Heart right ventricle (tissue), 16 donors: ENCODE measurements at regions of chr10 and their contacts with region 1.

Region 1: DNA sequence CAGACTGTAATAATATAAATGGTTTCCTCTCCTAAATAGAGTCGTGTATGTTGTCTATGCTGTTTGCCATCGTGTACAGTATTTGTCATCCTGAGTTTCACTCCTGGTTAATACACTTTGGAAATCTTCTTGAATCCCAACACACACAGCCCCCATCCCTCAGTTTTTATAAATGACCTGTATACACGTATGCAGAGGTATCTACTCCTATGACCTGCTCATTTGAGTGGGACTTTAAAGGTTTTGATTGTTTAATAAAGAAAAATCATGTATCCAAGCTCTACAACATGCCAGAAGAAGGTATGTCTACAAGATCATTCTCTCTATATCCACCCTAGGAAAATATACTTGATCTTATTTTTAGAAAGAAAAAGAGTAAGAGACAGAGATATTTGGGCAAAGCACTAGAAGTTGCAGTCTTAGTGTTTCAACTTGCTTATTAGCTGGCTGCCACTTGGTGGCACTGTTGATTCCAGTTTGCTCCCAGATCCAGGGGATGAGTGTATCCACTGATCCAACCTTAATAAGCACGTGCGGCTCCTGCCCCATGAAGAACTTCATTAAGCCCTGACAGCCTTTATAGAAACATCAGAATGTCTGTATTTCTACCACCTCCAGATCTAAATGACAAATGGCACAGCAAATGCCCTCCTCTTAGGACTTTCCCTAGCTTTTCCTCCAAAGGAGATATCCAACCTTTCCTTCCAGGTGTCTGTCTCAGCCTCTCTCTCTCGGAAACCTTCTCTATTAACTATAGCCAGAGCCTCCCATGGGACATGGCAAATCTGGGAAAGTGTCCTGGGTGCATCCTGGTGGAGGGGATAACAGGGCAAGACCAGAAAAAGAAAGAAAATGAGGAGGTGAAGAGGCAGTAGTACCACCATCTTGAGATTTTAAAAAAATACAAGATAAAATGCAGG is 181.6 kb upstream of the NEBL start:
- DNase-seq: peak; percentile 42 to 72
- ATAC-seq: peak; percentile 69 to 93 (median 85)
- H3K4me3 ChIP-seq: no peak overlapping the region
- H3K27ac ChIP-seq: peak overlapping the region in 5 of 10 donors; percentile 8 to 73 (median 51)
- H3K4me1 ChIP-seq: peaks cover 0 to 15% (median 0%) of the 10 kb centered on the region in 9 donors
- H3K27me3 ChIP-seq: no peaks in the 10 kb centered on the region
- CTCF ChIP-seq: peak; percentile 52 to 87 (median 79)

Region 2: GRCh38 chr10:20891338-20891714 is 187.3 kb before region 1 on chr10:
- intact Hi-C with region 1: loop called in 2 of 10 experiments (anchors 5 kb)
- DNase-seq: no peak
- ATAC-seq: peak in 4 of 8 donors; percentile 47 to 68 (median 56)
- H3K4me3 ChIP-seq: peak overlapping the region in 9 of 10 donors; percentile 2 to 59 (median 35)
- H3K27ac ChIP-seq: peak overlapping the region in 9 of 10 donors; percentile 23 to 95 (median 89)
- H3K4me1 ChIP-seq: peaks cover 0 to 27% (median 5%) of the 10 kb centered on the region in 9 donors
- H3K27me3 ChIP-seq: no peaks in the 10 kb centered on the region
- CTCF ChIP-seq: no peak

Region 3: GRCh38 chr10:21125471-21126228 is 47.0 kb after region 1 on chr10:
- intact Hi-C with region 1: no loop called
- DNase-seq: no peak
- ATAC-seq: no peak
- H3K4me3 ChIP-seq: no peak overlapping the region
- H3K27ac ChIP-seq: no peak overlapping the region
- H3K4me1 ChIP-seq: no peaks in the 10 kb centered on the region
- H3K27me3 ChIP-seq: no peaks in the 10 kb centered on the region
- CTCF ChIP-seq: no peak

Region 4: DNA sequence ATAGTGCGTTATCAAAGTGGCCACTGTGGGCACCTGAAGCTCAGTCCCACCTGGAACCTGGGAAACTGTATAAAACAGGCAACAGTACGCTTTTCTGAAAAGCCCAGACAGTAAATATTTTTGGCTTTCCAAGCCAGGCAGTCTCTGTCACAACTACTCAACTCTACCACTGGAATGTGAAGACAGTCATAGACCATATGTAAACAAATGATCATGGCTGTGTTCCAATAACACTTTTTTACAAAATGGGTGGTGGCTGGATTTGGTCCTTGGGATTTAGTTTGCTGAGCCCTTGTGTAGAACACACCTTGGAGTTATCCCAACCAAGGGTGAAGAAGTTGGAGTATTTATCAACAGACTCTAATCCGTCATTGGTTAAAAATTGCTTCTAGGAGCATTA is 187.0 kb after region 1 on chr10:
- intact Hi-C with region 1: loop called (anchors 1 to 5 kb)
- DNase-seq: no peak
- ATAC-seq: no peak
- H3K4me3 ChIP-seq: no peak overlapping the region
- H3K27ac ChIP-seq: no peak overlapping the region
- H3K4me1 ChIP-seq: peaks cover 0 to 4% (median 0%) of the 10 kb centered on the region in 9 donors
- H3K27me3 ChIP-seq: no peaks in the 10 kb centered on the region
- CTCF ChIP-seq: no peak

Region 5: GRCh38 chr10:21273400-21273932 is 194.8 kb after region 1 on chr10:
- intact Hi-C with region 1: loop called in 9 of 10 experiments (anchors 1 to 5 kb)
- DNase-seq: no peak
- ATAC-seq: peak in 3 of 8 donors; percentile 15 to 50 (median 21)
- H3K4me3 ChIP-seq: no peak overlapping the region
- H3K27ac ChIP-seq: no peak overlapping the region
- H3K4me1 ChIP-seq: peaks cover 0 to 5% (median 0%) of the 10 kb centered on the region in 9 donors
- H3K27me3 ChIP-seq: no peaks in the 10 kb centered on the region
- CTCF ChIP-seq: no peak

Region 6: GRCh38 chr10:21953585-21954057 is 875.0 kb after region 1 on chr10:
- intact Hi-C with region 1: loop called in 1 of 10 experiments (anchors 10 kb)
- DNase-seq: no peak
- ATAC-seq: peak in 5 of 8 donors; percentile 52 to 72 (median 59)
- H3K4me3 ChIP-seq: no peak overlapping the region
- H3K27ac ChIP-seq: no peak overlapping the region
- H3K4me1 ChIP-seq: peaks cover 0 to 22% (median 13%) of the 10 kb centered on the region in 9 donors
- H3K27me3 ChIP-seq: no peaks in the 10 kb centered on the region
- CTCF ChIP-seq: peak in 8 of 9 donors; percentile 10 to 64 (median 46)